ENCODE measurements at regions of chrX and their contacts with region 1.

Region 1: DNA sequence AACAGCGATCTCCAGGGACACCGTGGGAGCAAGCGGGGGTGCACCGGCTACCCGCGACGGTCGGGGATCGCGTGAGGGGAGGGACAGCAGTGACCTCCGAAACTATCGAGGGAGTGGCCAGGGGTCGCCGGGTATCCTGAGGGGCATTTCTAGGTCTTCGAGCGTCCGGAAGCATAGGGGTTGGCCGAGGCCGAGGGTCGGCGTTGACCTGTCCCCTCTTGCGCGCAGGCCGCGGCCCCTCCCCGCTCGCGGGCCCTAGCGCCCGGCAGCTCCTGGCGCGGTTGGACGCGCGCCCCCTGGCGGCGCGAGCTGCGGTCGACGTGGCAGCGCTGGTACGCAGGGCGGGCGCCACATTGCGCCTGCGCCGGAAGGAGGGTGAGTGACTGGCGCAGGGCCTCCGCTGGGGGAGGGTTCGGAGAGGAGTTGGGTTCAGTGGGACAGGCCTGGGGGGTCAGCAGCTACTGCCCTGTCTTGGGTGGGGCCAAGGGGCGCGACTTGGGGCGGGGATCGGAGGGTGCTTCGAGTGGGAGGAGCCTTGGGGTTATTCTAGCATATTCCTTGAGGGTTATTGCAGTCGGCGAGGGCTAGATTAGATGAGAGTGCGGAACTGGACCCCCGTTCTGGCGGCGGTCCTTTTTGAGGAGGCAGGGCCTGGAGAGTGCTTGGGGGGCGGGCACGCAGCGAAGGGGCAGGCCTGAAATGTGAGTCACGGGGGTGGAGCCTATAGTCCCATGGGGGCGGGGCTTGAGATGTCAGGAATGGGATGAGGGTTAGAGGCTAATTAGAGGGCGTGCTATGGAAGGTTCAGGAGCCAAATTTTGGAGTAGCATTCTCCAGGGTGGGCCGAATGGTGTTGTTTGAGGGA is 1.2 kb downstream of the MAGIX start:
- DNase-seq: peak; percentile 88 to 89
- H3K4me3 ChIP-seq: peak overlapping the region; percentile 41
- H3K4me3 Mint-ChIP-seq: peak overlapping the region; percentile 73
- H3K27ac Mint-ChIP-seq: peak overlapping the region; percentile 89
- H3K4me1 ChIP-seq: no peaks in the 10 kb centered on the region
- H3K4me1 Mint-ChIP-seq: peaks cover 7% of the 10 kb centered on the region
- H3K27me3 ChIP-seq: no peaks in the 10 kb centered on the region
- H3K27me3 Mint-ChIP-seq: no peaks in the 10 kb centered on the region
- CTCF ChIP-seq: peak; percentile 25 to 53

Region 2: DNA sequence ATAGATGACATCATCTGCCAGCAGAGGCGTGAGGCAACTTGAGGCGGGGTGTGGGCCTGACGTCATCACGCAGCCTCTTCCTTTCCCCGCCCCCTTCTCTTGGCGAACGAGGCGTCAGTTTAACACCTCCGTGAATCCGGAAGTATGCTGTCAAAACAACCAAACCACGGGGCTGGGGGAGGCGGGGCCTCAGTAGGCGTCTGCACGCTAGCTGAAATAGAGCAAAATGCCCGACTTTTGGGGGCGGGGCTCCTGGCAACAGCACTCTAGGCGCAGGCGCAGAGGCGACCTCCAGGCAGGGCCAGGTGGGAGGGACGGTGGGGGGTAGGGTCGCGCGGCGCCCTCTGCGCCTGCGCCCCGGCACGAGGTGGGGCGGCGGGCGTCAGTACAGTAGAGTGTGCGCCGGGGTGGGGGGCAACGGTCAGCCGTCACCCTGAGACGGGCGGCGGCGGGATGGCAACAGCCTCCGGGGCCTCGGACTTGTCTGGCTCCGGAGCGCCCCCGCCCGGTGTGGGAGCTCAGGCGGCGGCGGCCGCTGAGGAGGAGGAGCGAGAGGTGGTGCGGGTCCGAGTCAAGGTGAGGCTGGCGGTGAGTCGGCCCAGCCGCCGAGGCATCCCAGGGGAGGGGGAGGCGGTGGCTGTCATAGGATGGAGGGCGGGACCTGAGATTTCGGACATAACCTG is 624.3 kb before region 1 on chrX and contains the start of gene TBC1D25:
- CTCF ChIA-PET with region 1: no interaction called
- POLR2A ChIA-PET with region 1: no interaction called
- intact Hi-C with region 1: no loop called
- DNase-seq: peak; percentile 96 to 98
- H3K4me3 ChIP-seq: peak within 1 kb of the TSS; percentile 68
- H3K4me3 Mint-ChIP-seq: peak within 1 kb of the TSS; percentile 87
- H3K27ac Mint-ChIP-seq: peak within 1 kb of the TSS; percentile 71
- H3K4me1 ChIP-seq: no peaks in the 10 kb centered on the region
- H3K4me1 Mint-ChIP-seq: peaks cover 8% of the 10 kb centered on the region
- H3K27me3 ChIP-seq: no peaks in the 10 kb centered on the region
- H3K27me3 Mint-ChIP-seq: no peaks in the 10 kb centered on the region
- CTCF ChIP-seq: peak in 1 of 2 experiments; percentile 27
- total RNA-seq, gene TBC1D25: 9.3 and 11.1 TPM in 2 replicates

Region 3: DNA sequence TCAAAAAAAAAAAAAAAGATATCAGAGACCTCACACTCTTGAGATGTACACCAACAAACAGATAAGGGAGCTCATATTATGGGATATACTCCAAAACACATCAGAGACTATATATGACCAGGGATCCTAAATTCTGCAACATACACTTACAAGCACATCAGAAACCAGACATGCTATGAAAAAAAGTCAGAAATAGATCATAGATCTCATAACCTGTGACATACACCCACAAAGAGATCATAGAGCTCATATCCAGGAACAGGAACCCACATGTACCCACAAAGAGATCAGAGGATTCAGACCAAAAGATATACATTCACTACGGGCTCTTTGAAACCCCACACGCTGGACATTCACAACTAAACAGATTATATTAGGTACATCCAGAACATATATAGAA is 437.2 kb before region 1 on chrX:
- CTCF ChIA-PET with region 1: no interaction called
- POLR2A ChIA-PET with region 1: no interaction called
- intact Hi-C with region 1: no loop called
- DNase-seq: no peak
- H3K4me3 ChIP-seq: no peak overlapping the region
- H3K4me3 Mint-ChIP-seq: no peak overlapping the region
- H3K27ac Mint-ChIP-seq: no peak overlapping the region
- H3K4me1 ChIP-seq: no peaks in the 10 kb centered on the region
- H3K4me1 Mint-ChIP-seq: no peaks in the 10 kb centered on the region
- H3K27me3 ChIP-seq: no peaks in the 10 kb centered on the region
- H3K27me3 Mint-ChIP-seq: no peaks in the 10 kb centered on the region
- CTCF ChIP-seq: no peak

Region 4: DNA sequence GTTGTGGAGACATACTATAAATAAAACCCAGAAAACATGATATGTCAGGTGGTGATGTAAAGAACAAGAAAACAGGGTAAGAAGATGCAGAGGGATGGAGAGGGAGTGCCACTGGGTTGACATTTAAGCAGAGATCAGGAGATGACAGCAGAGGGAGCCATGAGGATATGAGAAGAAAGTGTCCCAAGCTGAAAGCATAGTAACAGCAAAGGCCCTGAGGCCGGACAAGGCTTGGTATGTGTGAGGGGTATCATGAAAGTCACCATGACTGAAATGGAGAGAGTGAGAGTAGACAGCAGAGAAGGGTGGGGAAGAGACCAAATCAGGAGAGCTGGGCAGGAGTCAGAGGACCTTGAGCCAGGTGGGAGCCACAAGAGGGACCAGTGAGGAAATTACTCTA is 43.7 kb before region 1 on chrX:
- CTCF ChIA-PET with region 1: no interaction called
- POLR2A ChIA-PET with region 1: no interaction called
- intact Hi-C with region 1: loop called (anchors 1 kb)
- DNase-seq: peak in 1 of 2 experiments; percentile 6
- H3K4me3 ChIP-seq: no peak overlapping the region
- H3K4me3 Mint-ChIP-seq: no peak overlapping the region
- H3K27ac Mint-ChIP-seq: no peak overlapping the region
- H3K4me1 ChIP-seq: no peaks in the 10 kb centered on the region
- H3K4me1 Mint-ChIP-seq: peaks cover 12% of the 10 kb centered on the region
- H3K27me3 ChIP-seq: no peaks in the 10 kb centered on the region
- H3K27me3 Mint-ChIP-seq: no peaks in the 10 kb centered on the region
- CTCF ChIP-seq: no peak

Region 5: GRCh38 chrX:49184294-49185061 is 20.7 kb after region 1 on chrX:
- CTCF ChIA-PET with region 1: no interaction called
- POLR2A ChIA-PET with region 1: no interaction called
- intact Hi-C with region 1: no loop called
- DNase-seq: peak in 1 of 2 experiments; percentile 59
- H3K4me3 ChIP-seq: no peak overlapping the region
- H3K4me3 Mint-ChIP-seq: peak overlapping the region; percentile 66
- H3K27ac Mint-ChIP-seq: peak overlapping the region; percentile 73
- H3K4me1 ChIP-seq: peaks cover 5% of the 10 kb centered on the region; the same call in 1 of the 2 replicates
- H3K4me1 Mint-ChIP-seq: peaks cover 2% of the 10 kb centered on the region
- H3K27me3 ChIP-seq: no peaks in the 10 kb centered on the region
- H3K27me3 Mint-ChIP-seq: no peaks in the 10 kb centered on the region
- CTCF ChIP-seq: no peak